Ascending aorta (tissue), 2 donors: ENCODE measurements at regions of chr6 and their contacts with region 1.

Region 1: DNA sequence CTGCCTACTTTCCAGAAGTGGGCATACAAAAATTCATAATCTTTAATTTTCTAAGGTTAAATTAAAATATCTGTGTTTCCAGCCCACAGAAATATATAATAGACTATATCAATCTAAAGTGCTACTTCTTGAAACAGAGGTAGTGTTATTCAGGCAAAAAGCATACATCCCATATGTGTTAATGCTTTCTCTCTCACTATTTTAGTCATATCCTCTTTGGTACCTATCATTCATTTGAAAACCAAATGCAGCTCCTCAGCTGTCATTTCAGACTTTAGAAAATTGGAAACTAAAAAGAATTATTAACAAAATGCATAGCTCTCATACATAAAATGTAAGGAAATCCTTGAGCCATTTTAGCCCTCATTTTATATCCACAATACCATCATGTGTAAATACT is 925 bp downstream of the FHL5 start:
- DNase-seq: no peak
- H3K4me3 ChIP-seq: peak overlapping the region; percentile 46 to 53
- H3K27ac ChIP-seq: peak overlapping the region; percentile 30 to 57
- H3K4me1 ChIP-seq: no peaks in the 10 kb centered on the region
- H3K27me3 ChIP-seq: no peaks in the 10 kb centered on the region
- CTCF ChIP-seq: no peak

Region 2: GRCh38 chr6:96611342-96611991 is 47.6 kb after region 1 on chr6:
- intact Hi-C with region 1: loop called (anchors 5 kb)
- DNase-seq: no peak
- H3K4me3 ChIP-seq: no peak overlapping the region
- H3K27ac ChIP-seq: no peak overlapping the region
- H3K4me1 ChIP-seq: peaks cover 7 to 27% of the 10 kb centered on the region in 2 donors
- H3K27me3 ChIP-seq: no peaks in the 10 kb centered on the region
- CTCF ChIP-seq: no peak